ENCODE measurements at regions of chr12 and their contacts with region 1.

Region 1: GRCh38 chr12:132144115-132144812 is at the starts of genes DDX51 and NOC4L:
- DNase-seq: peak; percentile 97
- H3K4me3 ChIP-seq: peak within 1 kb of the TSS; percentile 54 to 77 (median 55)
- H3K27ac ChIP-seq: peak within 1 kb of the TSS; percentile 30
- H3K4me1 ChIP-seq: peaks cover 14% of the 10 kb centered on the region
- H3K27me3 ChIP-seq: no peaks in the 10 kb centered on the region
- CTCF ChIP-seq: no peak
- POLR2A ChIP-seq: peak; percentile 62
- total RNA-seq, gene DDX51: 23.5 and 27.2 TPM in 2 replicates
- total RNA-seq, gene NOC4L: 28.0 and 29.4 TPM in 2 replicates

Region 2: GRCh38 chr12:132083941-132084620 is 60.2 kb before region 1 on chr12:
- CTCF ChIA-PET with region 1: no interaction called
- POLR2A ChIA-PET with region 1: no interaction called
- dilution Hi-C with region 1: no loop called
- intact Hi-C with region 1: loop called (anchors 2 kb)
- DNase-seq: peak; percentile 88
- H3K4me3 ChIP-seq: peak overlapping the region; percentile 30 to 99 (median 56)
- H3K27ac ChIP-seq: peak overlapping the region; percentile 81
- H3K4me1 ChIP-seq: peaks cover 12% of the 10 kb centered on the region
- H3K27me3 ChIP-seq: no peaks in the 10 kb centered on the region
- CTCF ChIP-seq: no peak
- POLR2A ChIP-seq: peak; percentile 84

Measured in endothelial cell of umbilical vein (primary cell).